ENCODE measurements at regions of chr7 and their contacts with region 1.

Region 1: GRCh38 chr7:128904381-128905197 is 5.9 kb downstream of the KCP start:
- DNase-seq: peak in 1 of 2 experiments; percentile 54
- H3K4me3 ChIP-seq: no peak overlapping the region
- H3K27ac ChIP-seq: no peak overlapping the region
- H3K4me1 ChIP-seq: peaks cover 2 to 9% (median 5%) of the 10 kb centered on the region in 4 experiments; a peak in 5 of 7 replicates
- H3K27me3 ChIP-seq: peaks cover 0 to 12% (median 10%) of the 10 kb centered on the region in 4 experiments; a peak in 5 of 7 replicates
- CTCF ChIP-seq: peak in 2 of 3 experiments; percentile 65; a peak in 3 of 4 replicates
- EP300 ChIP-seq: no peak
- POLR2A ChIP-seq: no peak
- RAD21 ChIP-seq: peak; percentile 71

Region 2: GRCh38 chr7:128849804-128850490 is 54.6 kb before region 1 on chr7:
- CTCF ChIA-PET with region 1: no interaction called
- POLR2A ChIA-PET with region 1: no interaction called
- DNase-seq: no peak
- H3K4me3 ChIP-seq: no peak overlapping the region
- H3K27ac ChIP-seq: no peak overlapping the region
- H3K4me1 ChIP-seq: no peaks in the 10 kb centered on the region; a peak in 1 of 7 replicates
- H3K27me3 ChIP-seq: no peaks in the 10 kb centered on the region
- CTCF ChIP-seq: no peak
- EP300 ChIP-seq: no peak
- POLR2A ChIP-seq: no peak
- RAD21 ChIP-seq: no peak

Region 3: DNA sequence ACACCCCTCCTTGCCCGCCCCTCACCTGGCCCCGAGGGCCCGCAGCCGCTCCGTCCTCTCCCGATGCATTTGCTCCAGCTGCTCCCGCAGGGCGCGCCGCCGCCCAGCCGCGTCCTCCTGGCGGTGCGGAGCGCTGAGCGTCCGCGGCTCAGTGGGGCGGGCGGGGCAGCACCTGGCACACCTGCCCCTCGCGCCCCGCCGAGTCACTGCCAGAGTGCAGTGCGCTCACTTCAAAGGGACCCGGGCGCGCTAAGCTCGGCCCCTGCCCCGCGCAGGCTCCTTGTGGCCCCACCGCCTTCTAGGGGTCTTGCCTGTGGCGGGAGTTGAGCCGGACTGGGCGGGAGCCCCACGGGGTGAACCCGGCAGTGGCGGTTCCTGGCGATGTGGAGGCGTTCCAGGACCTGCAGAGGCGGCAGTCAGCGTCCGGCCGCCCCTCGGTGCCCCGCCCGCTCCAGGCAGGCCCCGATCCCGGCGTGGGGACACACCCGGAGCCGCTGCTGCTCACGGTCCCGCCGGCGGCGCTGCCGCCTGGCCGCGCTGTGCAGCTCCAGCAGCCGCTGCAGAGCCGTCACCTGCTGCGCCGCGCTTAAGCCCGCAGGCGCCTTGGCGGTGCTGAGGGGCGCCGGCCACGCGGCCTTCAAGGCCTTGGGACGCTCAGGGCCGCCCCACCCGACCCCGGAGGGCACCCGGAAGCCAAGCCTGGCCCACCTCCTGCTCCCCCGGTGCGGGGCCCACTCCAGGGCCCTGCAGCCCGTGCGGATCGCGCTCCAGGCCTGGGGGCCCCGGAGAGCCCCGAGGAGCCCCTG is 35.2 kb before region 1 on chr7:
- CTCF ChIA-PET with region 1: no interaction called
- POLR2A ChIA-PET with region 1: no interaction called
- DNase-seq: peak in 1 of 2 experiments; percentile 81
- H3K4me3 ChIP-seq: peak overlapping the region; percentile 49 to 73 (median 57)
- H3K27ac ChIP-seq: no peak overlapping the region
- H3K4me1 ChIP-seq: peaks cover 0 to 18% (median 12%) of the 10 kb centered on the region in 4 experiments; a peak in 6 of 7 replicates
- H3K27me3 ChIP-seq: peaks cover 5 to 42% (median 36%) of the 10 kb centered on the region in 4 experiments
- CTCF ChIP-seq: no peak
- EP300 ChIP-seq: no peak
- POLR2A ChIP-seq: no peak
- RAD21 ChIP-seq: no peak

Region 4: DNA sequence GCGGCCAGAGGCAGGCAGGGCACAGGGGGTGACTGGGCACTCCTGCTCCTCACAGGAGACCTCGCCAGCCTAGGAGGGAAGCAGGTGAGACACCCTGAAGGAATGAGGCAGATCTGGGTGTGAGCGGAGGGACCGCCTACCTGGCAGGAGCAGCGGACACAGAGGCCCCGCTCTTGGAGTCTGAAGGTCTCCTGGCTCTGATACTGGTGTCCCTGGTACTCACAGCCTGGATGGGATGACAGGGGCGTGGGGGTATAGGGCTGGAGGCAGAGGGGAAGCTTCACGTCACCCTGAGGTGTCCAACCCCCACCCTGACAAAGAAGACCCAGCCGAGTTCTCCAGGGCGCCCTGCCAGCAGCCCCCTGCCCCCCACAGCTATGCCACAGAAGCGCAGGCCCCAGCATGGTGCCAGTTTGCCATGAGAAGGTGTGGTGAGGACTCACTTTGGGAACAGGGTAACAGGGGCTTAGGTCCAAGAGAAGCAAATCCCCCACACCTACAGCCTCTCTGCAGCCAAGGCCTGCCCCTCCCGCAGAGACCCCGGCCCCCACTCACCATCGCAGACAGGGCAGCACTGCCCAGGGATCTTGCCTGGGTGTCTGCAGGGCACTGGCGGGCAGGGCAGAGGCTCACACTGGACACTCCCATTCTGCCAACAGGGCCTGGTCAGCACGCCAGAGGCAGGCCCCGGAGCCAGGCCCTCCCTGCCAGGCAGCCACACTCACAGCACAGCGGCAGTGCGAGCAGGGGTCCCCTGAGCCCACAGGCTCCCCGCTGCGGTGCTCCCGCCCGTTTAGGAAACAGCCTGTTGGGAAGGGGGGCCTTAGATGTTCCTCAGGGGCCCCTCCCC is 11.1 kb before region 1 on chr7:
- CTCF ChIA-PET with region 1: interaction called, 14 read pairs
- POLR2A ChIA-PET with region 1: interaction called, 4 read pairs
- DNase-seq: no peak
- H3K4me3 ChIP-seq: no peak overlapping the region
- H3K27ac ChIP-seq: no peak overlapping the region
- H3K4me1 ChIP-seq: peaks cover 0 to 15% (median 8%) of the 10 kb centered on the region in 4 experiments; a peak in 5 of 7 replicates
- H3K27me3 ChIP-seq: peaks cover 0 to 7% (median 4%) of the 10 kb centered on the region in 4 experiments; a peak in 4 of 7 replicates
- CTCF ChIP-seq: no peak
- EP300 ChIP-seq: no peak
- POLR2A ChIP-seq: no peak
- RAD21 ChIP-seq: no peak

Region 5: GRCh38 chr7:129227646-129228578 is 323.3 kb after region 1 on chr7:
- CTCF ChIA-PET with region 1: no interaction called
- POLR2A ChIA-PET with region 1: no interaction called
- DNase-seq: no peak
- H3K4me3 ChIP-seq: no peak overlapping the region
- H3K27ac ChIP-seq: no peak overlapping the region
- H3K4me1 ChIP-seq: peaks cover 0 to 9% (median 4%) of the 10 kb centered on the region in 4 experiments; a peak in 3 of 7 replicates
- H3K27me3 ChIP-seq: no peaks in the 10 kb centered on the region
- CTCF ChIP-seq: no peak
- EP300 ChIP-seq: no peak
- POLR2A ChIP-seq: no peak
- RAD21 ChIP-seq: no peak